HepG2 (cell line): ENCODE measurements at regions of chr9 and their contacts with region 1.

Region 1: DNA sequence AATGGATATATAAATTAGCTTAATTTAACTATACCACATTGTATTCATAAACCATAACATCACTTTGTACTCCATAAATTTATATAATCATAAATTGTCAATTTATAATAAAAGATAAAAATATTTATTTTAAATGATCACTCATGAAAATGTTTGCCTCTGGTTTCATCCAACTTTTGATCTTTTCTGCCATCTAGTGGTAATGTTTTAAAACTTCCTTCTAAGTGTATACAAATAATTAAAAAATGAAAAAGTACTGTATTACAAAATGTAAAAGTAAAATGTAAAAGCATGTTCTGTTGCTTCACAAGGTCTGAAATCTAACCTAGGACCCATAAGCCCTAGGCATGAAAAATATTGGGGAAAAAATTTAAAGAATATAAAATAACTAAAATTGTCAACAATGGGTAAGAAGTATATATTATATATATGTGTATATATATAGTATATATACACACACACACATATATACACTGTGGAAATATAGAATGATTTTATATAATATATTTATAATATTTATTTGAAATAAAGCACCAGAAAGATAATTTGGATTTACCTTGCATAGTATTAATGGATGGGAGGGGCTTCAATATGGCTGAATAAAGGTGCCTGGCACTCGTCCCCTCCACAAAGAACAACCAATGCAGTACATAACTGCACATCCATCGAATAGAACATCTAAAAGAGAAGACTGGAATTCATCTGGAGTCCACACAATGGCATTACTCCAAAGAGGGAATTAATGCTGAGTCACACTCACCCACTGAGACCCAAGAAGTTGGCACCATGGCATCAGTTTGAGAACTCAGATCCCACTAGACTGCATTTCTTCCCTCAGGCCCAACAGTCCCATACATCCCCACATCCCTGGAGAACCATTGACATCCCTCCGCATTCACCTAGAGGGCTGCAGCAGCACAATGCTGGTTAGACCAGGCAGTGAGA is 32.5 kb downstream of the ANXA1 start:
- DNase-seq: peak; percentile 21
- ATAC-seq: no peak
- H3K4me3 ChIP-seq: no peak overlapping the region
- H3K27ac ChIP-seq: no peak overlapping the region
- H3K4me1 ChIP-seq: no peaks in the 10 kb centered on the region
- H3K27me3 ChIP-seq: no peaks in the 10 kb centered on the region
- CTCF ChIP-seq: peak; percentile 30
- EP300 ChIP-seq: no peak
- POLR2A ChIP-seq: no peak
- RAD21 ChIP-seq: no peak

Region 2: DNA sequence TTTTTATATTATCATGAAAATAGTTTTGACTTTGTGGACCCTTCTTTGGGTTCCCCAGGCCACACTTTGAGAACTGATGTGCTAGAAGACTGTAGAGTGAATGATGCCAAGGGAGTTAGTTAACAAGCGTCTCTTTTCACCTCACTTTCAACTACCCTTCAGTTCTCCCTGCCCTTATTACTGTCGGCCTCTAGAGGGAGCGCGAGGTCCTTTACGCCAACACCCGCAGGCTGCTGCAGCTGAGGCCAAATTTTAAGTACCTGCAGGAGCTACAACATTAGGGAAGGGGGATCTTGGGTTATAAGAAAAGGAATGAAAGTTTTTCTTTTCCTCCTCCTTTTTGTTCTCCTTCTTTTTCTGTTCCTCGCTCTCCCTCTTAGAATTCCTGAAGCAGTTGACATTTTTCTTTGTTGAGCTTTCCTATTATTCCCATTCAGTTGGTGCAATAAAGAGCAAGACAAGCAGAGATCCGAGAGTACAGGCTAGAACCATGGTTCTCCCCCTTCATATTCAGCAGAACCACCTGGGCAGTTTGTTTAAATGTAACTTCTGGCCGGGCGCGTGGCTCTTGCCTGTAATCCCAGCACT is 903.2 kb before region 1 on chr9:
- CTCF ChIA-PET with region 1: no interaction called
- POLR2A ChIA-PET with region 1: no interaction called
- in situ Hi-C with region 1: no loop called
- intact Hi-C with region 1: loop called (anchors 5 kb)
- DNase-seq: peak; percentile 38
- ATAC-seq: peak; percentile 95
- H3K4me3 ChIP-seq: no peak overlapping the region
- H3K27ac ChIP-seq: no peak overlapping the region
- H3K4me1 ChIP-seq: no peaks in the 10 kb centered on the region
- H3K27me3 ChIP-seq: no peaks in the 10 kb centered on the region
- CTCF ChIP-seq: peak; percentile 91
- EP300 ChIP-seq: no peak
- POLR2A ChIP-seq: no peak
- RAD21 ChIP-seq: peak; percentile 86

Region 3: DNA sequence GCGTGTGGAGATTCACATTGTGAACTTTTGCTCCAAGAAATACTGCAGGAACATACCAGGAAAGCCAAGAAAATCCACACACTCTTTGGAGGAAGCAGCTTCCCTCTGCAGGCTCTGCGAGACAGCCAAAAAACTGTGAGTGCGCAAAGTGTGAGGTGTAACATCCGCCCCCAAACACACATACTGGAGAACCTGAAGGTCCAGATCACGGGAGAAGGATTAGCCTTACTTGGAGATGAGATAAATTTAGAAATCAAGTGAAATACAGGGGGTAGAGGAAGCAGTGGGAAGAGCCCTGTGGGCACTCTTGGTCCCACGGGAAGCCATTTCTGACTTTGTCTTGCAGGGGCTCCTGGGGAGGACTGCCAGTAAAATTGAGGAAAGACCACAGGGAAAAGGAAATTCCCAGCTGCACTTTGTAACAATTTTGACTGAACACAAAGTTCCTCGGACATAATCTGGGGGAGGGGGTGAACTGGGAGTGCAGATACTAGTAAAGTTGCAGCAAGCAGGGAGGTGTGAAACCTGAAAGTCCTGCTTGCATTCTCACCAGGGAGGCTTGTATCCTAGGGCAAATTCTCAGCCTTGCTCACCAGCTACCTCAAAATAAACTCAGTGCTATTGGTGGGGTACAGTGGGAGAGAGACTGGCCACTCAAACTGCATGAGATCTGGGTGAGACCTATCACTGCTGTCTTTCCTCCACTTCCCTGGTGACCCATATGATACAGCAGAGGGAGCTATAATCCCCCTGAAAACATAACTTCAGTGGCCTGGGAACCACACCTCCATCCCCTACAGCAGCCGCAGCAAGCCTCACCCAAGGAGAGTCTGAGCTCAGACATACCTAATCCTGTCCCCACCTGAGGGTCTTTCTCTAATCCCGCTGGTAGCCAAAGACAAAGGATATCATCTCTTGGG is 340.4 kb before region 1 on chr9:
- CTCF ChIA-PET with region 1: no interaction called
- POLR2A ChIA-PET with region 1: no interaction called
- in situ Hi-C with region 1: no loop called
- intact Hi-C with region 1: loop called (anchors 5 kb)
- DNase-seq: peak; percentile 74
- ATAC-seq: peak; percentile 100
- H3K4me3 ChIP-seq: peak overlapping the region; percentile 32 to 49 (median 40)
- H3K27ac ChIP-seq: peak overlapping the region; percentile 31
- H3K4me1 ChIP-seq: peaks cover 22% of the 10 kb centered on the region
- H3K27me3 ChIP-seq: no peaks in the 10 kb centered on the region
- CTCF ChIP-seq: peak; percentile 82
- EP300 ChIP-seq: no peak
- POLR2A ChIP-seq: no peak
- RAD21 ChIP-seq: peak; percentile 73; the same call in 1 of the 2 replicates

Region 4: GRCh38 chr9:72856972-72857623 is 327.1 kb before region 1 on chr9:
- CTCF ChIA-PET with region 1: interaction called, 6 read pairs
- POLR2A ChIA-PET with region 1: no interaction called
- in situ Hi-C with region 1: loop called (anchors 10 kb)
- intact Hi-C with region 1: loop called (anchors 5 kb)
- DNase-seq: peak; percentile 65
- ATAC-seq: no peak
- H3K4me3 ChIP-seq: no peak overlapping the region
- H3K27ac ChIP-seq: peak overlapping the region; percentile 99
- H3K4me1 ChIP-seq: peaks cover 30% of the 10 kb centered on the region
- H3K27me3 ChIP-seq: no peaks in the 10 kb centered on the region
- CTCF ChIP-seq: peak; percentile 70
- EP300 ChIP-seq: no peak
- POLR2A ChIP-seq: no peak
- RAD21 ChIP-seq: peak; percentile 43; the same call in 1 of the 2 replicates

Region 5: DNA sequence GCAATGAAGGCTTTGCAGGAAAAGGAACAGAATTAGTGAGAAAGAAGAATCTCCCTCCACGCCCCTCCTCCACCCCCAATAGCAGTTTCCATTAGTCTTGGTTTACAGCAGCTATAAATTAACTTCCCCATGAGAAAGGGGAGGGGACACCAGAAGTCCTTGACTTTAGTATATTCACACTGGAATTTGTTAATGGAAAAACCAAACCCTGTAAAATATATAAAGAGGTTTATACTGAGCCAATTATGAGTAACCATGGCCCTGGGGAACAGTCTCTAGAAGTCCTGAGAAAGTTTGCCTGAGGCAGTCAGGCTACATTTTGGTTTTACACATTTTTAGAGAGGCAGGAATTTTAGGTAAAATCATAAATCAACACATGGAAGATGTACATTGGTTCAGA is 319.9 kb before region 1 on chr9:
- CTCF ChIA-PET with region 1: no interaction called
- POLR2A ChIA-PET with region 1: no interaction called
- in situ Hi-C with region 1: loop called (anchors 10 kb)
- intact Hi-C with region 1: loop called (anchors 5 kb)
- DNase-seq: no peak
- ATAC-seq: no peak
- H3K4me3 ChIP-seq: no peak overlapping the region
- H3K27ac ChIP-seq: no peak overlapping the region
- H3K4me1 ChIP-seq: peaks cover 4% of the 10 kb centered on the region
- H3K27me3 ChIP-seq: no peaks in the 10 kb centered on the region
- CTCF ChIP-seq: no peak
- EP300 ChIP-seq: no peak
- POLR2A ChIP-seq: no peak
- RAD21 ChIP-seq: no peak

Region 6: GRCh38 chr9:73104342-73104741 is 79.8 kb before region 1 on chr9:
- CTCF ChIA-PET with region 1: interaction called, 14 read pairs
- POLR2A ChIA-PET with region 1: no interaction called
- in situ Hi-C with region 1: loop called (anchors 5 kb)
- intact Hi-C with region 1: loop called (anchors 1 kb)
- DNase-seq: no peak
- ATAC-seq: no peak
- H3K4me3 ChIP-seq: no peak overlapping the region
- H3K27ac ChIP-seq: no peak overlapping the region
- H3K4me1 ChIP-seq: no peaks in the 10 kb centered on the region
- H3K27me3 ChIP-seq: no peaks in the 10 kb centered on the region; a peak in 1 of 5 replicates
- CTCF ChIP-seq: no peak
- EP300 ChIP-seq: no peak
- POLR2A ChIP-seq: no peak
- RAD21 ChIP-seq: no peak

Region 7: GRCh38 chr9:73114958-73115357 is 69.2 kb before region 1 on chr9:
- CTCF ChIA-PET with region 1: no interaction called
- POLR2A ChIA-PET with region 1: no interaction called
- in situ Hi-C with region 1: no loop called
- intact Hi-C with region 1: no loop called
- DNase-seq: no peak
- ATAC-seq: no peak
- H3K4me3 ChIP-seq: no peak overlapping the region
- H3K27ac ChIP-seq: no peak overlapping the region
- H3K4me1 ChIP-seq: no peaks in the 10 kb centered on the region
- H3K27me3 ChIP-seq: no peaks in the 10 kb centered on the region
- CTCF ChIP-seq: no peak
- EP300 ChIP-seq: no peak
- POLR2A ChIP-seq: no peak
- RAD21 ChIP-seq: no peak